Naive thymus-derived CD4-positive, alpha-beta T cell (primary cell): ENCODE measurements at regions of chr17 and their contacts with region 1.

Region 1: GRCh38 chr17:45218895-45219661 is 2.6 kb upstream of the FMNL1 start:
- DNase-seq: peak; percentile 74 to 89 (median 81)
- ATAC-seq: peak; percentile 74
- H3K4me3 ChIP-seq: peak overlapping the region; percentile 72
- H3K4me3 Mint-ChIP-seq: peak overlapping the region; percentile 81 to 99 (median 90)
- H3K27ac ChIP-seq: peak overlapping the region; percentile 96
- H3K27ac Mint-ChIP-seq: peak overlapping the region; percentile 37 to 94 (median 87)
- H3K4me1 ChIP-seq: peaks cover 24 to 30% of the 10 kb centered on the region in 2 donors
- H3K4me1 Mint-ChIP-seq: peaks cover 29 to 52% (median 37%) of the 10 kb centered on the region in 7 donors
- H3K27me3 ChIP-seq: no peaks in the 10 kb centered on the region
- H3K27me3 Mint-ChIP-seq: no peaks in the 10 kb centered on the region

Region 2: GRCh38 chr17:45235416-45236281 is 16.6 kb after region 1 on chr17:
- CTCF ChIA-PET with region 1: interaction called, 397 read pairs
- POLR2A ChIA-PET with region 1: interaction called, 851 read pairs
- intact Hi-C with region 1: loop called (anchors 1 kb)
- DNase-seq: peak; percentile 59 to 83 (median 71)
- ATAC-seq: peak; percentile 78
- H3K4me3 ChIP-seq: no peak overlapping the region
- H3K4me3 Mint-ChIP-seq: peak overlapping the region in 3 of 10 donors; percentile 30 to 39 (median 38)
- H3K27ac ChIP-seq: peak overlapping the region; percentile 64
- H3K27ac Mint-ChIP-seq: peak overlapping the region; percentile 67 to 100 (median 93)
- H3K4me1 ChIP-seq: peaks cover 30 to 38% of the 10 kb centered on the region in 2 donors
- H3K4me1 Mint-ChIP-seq: peaks cover 38 to 75% (median 62%) of the 10 kb centered on the region in 7 donors
- H3K27me3 ChIP-seq: no peaks in the 10 kb centered on the region
- H3K27me3 Mint-ChIP-seq: no peaks in the 10 kb centered on the region

Region 3: DNA sequence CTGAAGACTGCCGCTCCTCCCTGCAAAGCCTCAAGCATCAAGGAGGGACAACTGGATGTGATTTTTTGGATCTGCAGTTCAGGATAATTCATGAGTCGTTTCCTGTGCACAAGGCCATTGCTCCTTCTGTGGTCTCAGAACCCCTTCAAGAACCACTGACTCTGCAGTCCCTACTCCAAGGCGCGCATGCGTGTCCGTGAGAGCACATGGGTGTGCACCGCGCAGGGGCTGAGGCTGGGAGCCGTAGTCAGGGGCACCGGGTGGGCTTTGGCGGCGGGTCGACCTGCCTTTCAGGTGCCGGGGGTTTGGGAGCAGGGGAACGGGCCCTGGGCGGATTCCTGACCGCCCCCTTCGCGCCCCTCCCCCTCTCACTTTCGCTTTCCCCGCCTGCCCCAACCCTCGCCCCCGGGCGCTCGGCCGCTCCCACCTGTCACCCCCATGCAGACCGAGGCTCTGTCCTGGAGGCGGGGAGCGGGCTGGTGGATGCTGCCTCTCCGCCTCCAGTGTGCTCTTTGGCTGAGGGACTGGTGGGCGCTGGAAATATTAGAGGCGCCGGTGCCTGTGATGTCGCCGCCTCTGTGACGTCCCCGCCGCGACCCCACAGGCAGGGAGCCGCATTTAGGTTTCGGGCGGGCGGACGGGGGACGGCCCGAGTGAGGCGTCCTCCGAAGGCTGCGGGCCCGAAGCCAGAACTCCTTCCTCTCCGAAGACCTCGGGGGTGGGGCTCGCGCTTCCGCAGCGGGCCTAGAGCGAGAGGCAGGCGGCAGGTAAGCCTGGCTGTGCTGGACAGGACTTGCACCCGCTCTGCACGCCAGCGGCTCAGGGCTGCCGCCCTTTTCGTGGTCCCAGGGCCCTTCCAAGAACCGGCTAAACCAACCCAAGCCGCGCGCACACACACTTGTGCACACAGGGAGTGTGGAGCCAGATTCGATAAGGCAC is 42.8 kb after region 1 on chr17 and contains the start of gene SPATA32:
- CTCF ChIA-PET with region 1: interaction called, 16 read pairs
- POLR2A ChIA-PET with region 1: interaction called, 851 read pairs
- intact Hi-C with region 1: no loop called
- DNase-seq: peak; percentile 45 to 69 (median 66)
- ATAC-seq: peak; percentile 83
- H3K4me3 ChIP-seq: peak within 1 kb of the TSS; percentile 52
- H3K4me3 Mint-ChIP-seq: peak within 1 kb of the TSS; percentile 77 to 89 (median 84)
- H3K27ac ChIP-seq: peak within 1 kb of the TSS; percentile 85
- H3K27ac Mint-ChIP-seq: peak within 1 kb of the TSS; percentile 58 to 93 (median 86)
- H3K4me1 ChIP-seq: peaks cover 10 to 31% of the 10 kb centered on the region in 2 donors
- H3K4me1 Mint-ChIP-seq: peaks cover 22 to 55% (median 45%) of the 10 kb centered on the region in 7 donors
- H3K27me3 ChIP-seq: no peaks in the 10 kb centered on the region
- H3K27me3 Mint-ChIP-seq: no peaks in the 10 kb centered on the region
- total RNA-seq, gene SPATA32: 0.12 to 1.1 (median 0.58) TPM in 4 of 5 experiments, not detected in the other

Region 4: DNA sequence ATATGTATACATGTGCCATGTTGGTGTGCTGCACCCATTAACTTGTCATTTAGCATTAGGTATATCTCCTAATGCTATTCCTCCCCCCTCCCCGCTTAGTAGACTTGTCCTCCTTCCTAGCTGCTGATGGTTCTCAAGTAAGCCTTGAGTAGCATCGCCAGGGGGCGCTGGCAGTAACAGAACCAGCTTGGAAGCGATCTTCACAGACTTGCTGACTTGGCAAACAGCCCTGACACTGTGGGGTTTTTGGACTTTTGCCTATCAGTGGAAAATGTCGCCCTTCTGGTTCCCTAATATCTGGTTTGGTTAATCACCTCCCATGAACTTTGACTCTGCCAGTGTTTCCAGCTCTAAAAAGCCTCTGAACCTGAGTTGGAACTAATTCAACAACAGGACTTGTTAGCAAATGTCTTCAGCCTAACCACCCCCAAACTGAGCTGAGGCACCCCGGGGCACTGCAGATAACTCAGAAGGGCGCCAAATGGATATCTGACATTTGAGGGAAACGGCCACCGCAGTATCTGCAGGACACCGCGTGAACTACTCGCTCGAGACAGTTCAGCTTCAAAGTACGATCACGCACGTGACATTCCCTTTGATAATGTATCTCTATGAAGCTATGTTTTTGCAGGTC is 58.3 kb after region 1 on chr17:
- CTCF ChIA-PET with region 1: interaction called, 111 read pairs
- POLR2A ChIA-PET with region 1: interaction called, 3 read pairs
- intact Hi-C with region 1: loop called in 1 of 2 experiments (anchors 1 kb)
- DNase-seq: peak; percentile 77 to 89 (median 86)
- ATAC-seq: peak; percentile 98
- H3K4me3 ChIP-seq: no peak overlapping the region
- H3K4me3 Mint-ChIP-seq: peak overlapping the region in 2 of 10 donors; percentile 26 to 28
- H3K27ac ChIP-seq: no peak overlapping the region
- H3K27ac Mint-ChIP-seq: peak overlapping the region; percentile 1 to 77 (median 40)
- H3K4me1 ChIP-seq: peaks cover 0 to 5% of the 10 kb centered on the region in 2 donors
- H3K4me1 Mint-ChIP-seq: peaks cover 3 to 22% (median 10%) of the 10 kb centered on the region in 7 donors
- H3K27me3 ChIP-seq: no peaks in the 10 kb centered on the region
- H3K27me3 Mint-ChIP-seq: no peaks in the 10 kb centered on the region

Region 5: DNA sequence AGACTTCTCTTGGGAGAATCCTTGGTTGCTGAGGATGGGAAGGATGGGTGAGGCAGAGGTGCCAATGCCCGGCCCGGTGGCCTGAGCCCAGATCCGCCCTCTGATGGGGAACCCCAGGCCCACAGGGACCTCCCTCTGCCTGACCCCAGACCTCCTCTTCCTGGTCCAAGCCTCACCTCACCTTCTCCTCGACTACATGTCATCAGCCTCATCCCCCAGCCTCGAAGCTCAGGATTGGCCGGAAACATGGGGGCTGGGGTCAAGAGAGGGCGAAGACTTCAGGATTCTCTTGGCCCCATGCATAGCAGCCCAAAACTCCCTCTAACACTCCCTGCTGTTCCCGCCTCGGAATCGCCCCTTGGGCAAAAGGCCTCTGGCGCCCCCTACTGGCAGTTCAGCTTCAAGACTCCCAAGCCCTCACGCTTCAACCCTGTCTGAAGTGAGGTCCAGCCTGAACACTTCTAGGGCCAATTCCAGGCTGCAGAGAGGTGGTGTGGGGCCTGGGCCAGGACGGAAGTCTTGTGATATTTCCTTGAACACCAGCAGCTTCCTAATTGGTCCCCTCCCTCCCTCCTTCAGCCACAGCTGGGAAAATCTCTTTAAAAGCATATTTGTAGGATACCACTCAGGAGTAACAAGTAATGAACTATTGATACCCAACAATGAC is 166.4 kb after region 1 on chr17:
- CTCF ChIA-PET with region 1: interaction called, 45 read pairs
- POLR2A ChIA-PET with region 1: interaction called, 6 read pairs
- intact Hi-C with region 1: loop called (anchors 1 kb)
- DNase-seq: peak; percentile 70 to 92 (median 85)
- ATAC-seq: peak; percentile 96
- H3K4me3 ChIP-seq: no peak overlapping the region
- H3K4me3 Mint-ChIP-seq: peak overlapping the region in 1 of 10 donors; percentile 37
- H3K27ac ChIP-seq: no peak overlapping the region
- H3K27ac Mint-ChIP-seq: peak overlapping the region in 3 of 9 donors; percentile 2 to 91 (median 58)
- H3K4me1 ChIP-seq: peaks cover 0 to 10% of the 10 kb centered on the region in 2 donors
- H3K4me1 Mint-ChIP-seq: peaks cover 11 to 23% (median 15%) of the 10 kb centered on the region in 7 donors
- H3K27me3 ChIP-seq: no peaks in the 10 kb centered on the region
- H3K27me3 Mint-ChIP-seq: peaks cover 0 to 14% (median 5%) of the 10 kb centered on the region in 5 donors

Region 6: GRCh38 chr17:45688353-45688752 is 469.3 kb after region 1 on chr17:
- CTCF ChIA-PET with region 1: no interaction called
- POLR2A ChIA-PET with region 1: no interaction called
- intact Hi-C with region 1: no loop called
- DNase-seq: no peak
- ATAC-seq: no peak
- H3K4me3 ChIP-seq: no peak overlapping the region
- H3K4me3 Mint-ChIP-seq: no peak overlapping the region
- H3K27ac ChIP-seq: no peak overlapping the region
- H3K27ac Mint-ChIP-seq: no peak overlapping the region
- H3K4me1 ChIP-seq: no peaks in the 10 kb centered on the region
- H3K4me1 Mint-ChIP-seq: no peaks in the 10 kb centered on the region
- H3K27me3 ChIP-seq: no peaks in the 10 kb centered on the region
- H3K27me3 Mint-ChIP-seq: peaks cover 19 to 32% (median 26%) of the 10 kb centered on the region in 5 donors